ENCODE measurements at regions of chr1 and their contacts with region 1.

Region 1: GRCh38 chr1:203673550-203674427 is 47.2 kb downstream of the ATP2B4 start:
- DNase-seq: peak; percentile 41 to 90 (median 75)
- ATAC-seq: peak; percentile 87 to 93 (median 91)
- H3K4me3 ChIP-seq: no peak overlapping the region
- H3K4me3 Mint-ChIP-seq: peak overlapping the region; percentile 64 to 72 (median 64)
- H3K27ac ChIP-seq: peak overlapping the region; percentile 77
- H3K27ac Mint-ChIP-seq: peak overlapping the region; percentile 98 to 100
- H3K4me1 ChIP-seq: peaks cover 49 to 81% of the 10 kb centered on the region in 2 experiments
- H3K4me1 Mint-ChIP-seq: peaks cover 65 to 85% (median 75%) of the 10 kb centered on the region in 3 donors
- H3K27me3 ChIP-seq: no peaks in the 10 kb centered on the region
- H3K27me3 Mint-ChIP-seq: no peaks in the 10 kb centered on the region

Region 2: GRCh38 chr1:203555076-203555475 is 118.7 kb before region 1 on chr1:
- CTCF ChIA-PET with region 1: interaction called in 1 of 2 experiments, 11 read pairs
- POLR2A ChIA-PET with region 1: no interaction called
- DNase-seq: no peak
- ATAC-seq: no peak
- H3K4me3 ChIP-seq: no peak overlapping the region
- H3K4me3 Mint-ChIP-seq: no peak overlapping the region
- H3K27ac ChIP-seq: no peak overlapping the region
- H3K27ac Mint-ChIP-seq: no peak overlapping the region
- H3K4me1 ChIP-seq: no peaks in the 10 kb centered on the region
- H3K4me1 Mint-ChIP-seq: no peaks in the 10 kb centered on the region
- H3K27me3 ChIP-seq: peaks cover 0 to 5% of the 10 kb centered on the region in 2 experiments
- H3K27me3 Mint-ChIP-seq: peaks cover 0 to 4% of the 10 kb centered on the region in 2 donors

Region 3: DNA sequence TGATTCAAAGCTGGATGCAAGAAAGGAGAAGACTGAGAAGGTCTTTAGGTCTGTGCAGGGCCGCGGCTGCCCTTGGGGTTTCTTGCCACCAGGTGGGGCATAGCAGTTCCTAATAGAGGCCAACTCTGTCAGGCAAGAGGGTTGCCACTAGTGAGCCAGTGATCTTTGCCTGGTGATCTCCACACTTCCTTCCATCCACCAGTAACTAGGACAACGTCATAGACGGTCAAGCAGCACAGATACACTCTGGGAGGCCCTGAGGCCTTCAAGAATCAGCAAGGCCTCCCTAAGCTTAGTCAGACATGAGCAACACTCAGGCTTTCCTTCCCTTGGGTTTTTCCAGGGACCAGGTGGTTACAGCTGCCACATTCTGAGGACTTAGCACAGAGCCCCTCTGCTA is 80.1 kb before region 1 on chr1:
- CTCF ChIA-PET with region 1: no interaction called
- POLR2A ChIA-PET with region 1: interaction called in 1 of 2 experiments, 11 read pairs
- DNase-seq: peak; percentile 12 to 75 (median 51)
- ATAC-seq: peak; percentile 62 to 93 (median 90)
- H3K4me3 ChIP-seq: no peak overlapping the region
- H3K4me3 Mint-ChIP-seq: no peak overlapping the region
- H3K27ac ChIP-seq: no peak overlapping the region
- H3K27ac Mint-ChIP-seq: peak overlapping the region in 1 of 2 donors; percentile 53
- H3K4me1 ChIP-seq: peaks cover 0 to 7% of the 10 kb centered on the region in 2 experiments
- H3K4me1 Mint-ChIP-seq: peaks cover 9 to 16% (median 15%) of the 10 kb centered on the region in 3 donors
- H3K27me3 ChIP-seq: peaks cover 0 to under 1% of the 10 kb centered on the region in 2 experiments
- H3K27me3 Mint-ChIP-seq: peaks cover 0 to 4% of the 10 kb centered on the region in 2 donors

Region 4: GRCh38 chr1:203649999-203650855 is 23.6 kb before region 1 on chr1:
- CTCF ChIA-PET with region 1: interaction called in 1 of 2 experiments, 47 read pairs
- POLR2A ChIA-PET with region 1: interaction called, 3 to 11 read pairs
- DNase-seq: peak in 34 of 35 experiments; percentile 10 to 81 (median 52)
- ATAC-seq: peak; percentile 65 to 82 (median 78)
- H3K4me3 ChIP-seq: peak overlapping the region; percentile 43 to 46
- H3K4me3 Mint-ChIP-seq: peak overlapping the region; percentile 71 to 83 (median 81)
- H3K27ac ChIP-seq: peak overlapping the region; percentile 89
- H3K27ac Mint-ChIP-seq: peak overlapping the region; percentile 93 to 95
- H3K4me1 ChIP-seq: peaks cover 40 to 82% of the 10 kb centered on the region in 2 experiments
- H3K4me1 Mint-ChIP-seq: peaks cover 68 to 84% (median 77%) of the 10 kb centered on the region in 3 donors
- H3K27me3 ChIP-seq: no peaks in the 10 kb centered on the region
- H3K27me3 Mint-ChIP-seq: no peaks in the 10 kb centered on the region

Region 5: DNA sequence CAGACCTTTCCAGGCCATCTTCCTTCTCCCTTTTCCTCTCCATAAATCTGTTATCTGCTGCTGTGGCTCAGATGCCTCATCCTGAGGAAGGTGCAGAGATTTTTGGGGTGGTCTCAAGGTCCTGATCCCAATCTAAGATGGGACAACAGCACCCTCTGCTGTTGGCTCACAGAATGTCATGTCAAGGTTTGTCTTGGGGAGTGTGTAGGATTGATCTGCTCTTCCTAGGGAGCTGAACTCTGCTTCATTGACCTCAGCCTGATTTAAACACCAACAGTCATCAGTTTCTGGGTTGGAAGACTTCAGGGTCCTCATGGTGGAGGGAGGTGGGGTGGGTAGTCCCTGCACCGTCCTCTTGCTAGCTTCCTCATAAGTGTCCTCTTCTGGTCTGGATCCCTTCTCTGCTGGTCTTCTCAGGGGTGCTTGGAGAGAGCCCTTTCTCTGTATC is 28.4 kb after region 1 on chr1:
- CTCF ChIA-PET with region 1: interaction called, 11 to 29 read pairs
- POLR2A ChIA-PET with region 1: interaction called in 1 of 2 experiments, 3 read pairs
- DNase-seq: peak in 34 of 35 experiments; percentile 24 to 85 (median 54)
- ATAC-seq: peak; percentile 60 to 75 (median 71)
- H3K4me3 ChIP-seq: no peak overlapping the region
- H3K4me3 Mint-ChIP-seq: no peak overlapping the region
- H3K27ac ChIP-seq: no peak overlapping the region
- H3K27ac Mint-ChIP-seq: peak overlapping the region; percentile 73 to 82
- H3K4me1 ChIP-seq: no peaks in the 10 kb centered on the region
- H3K4me1 Mint-ChIP-seq: peaks cover 10 to 15% (median 11%) of the 10 kb centered on the region in 3 donors
- H3K27me3 ChIP-seq: no peaks in the 10 kb centered on the region
- H3K27me3 Mint-ChIP-seq: no peaks in the 10 kb centered on the region

Region 6: GRCh38 chr1:203754455-203754864 is 80.7 kb after region 1 on chr1:
- CTCF ChIA-PET with region 1: interaction called in 1 of 2 experiments, 12 read pairs
- POLR2A ChIA-PET with region 1: no interaction called
- DNase-seq: peak in 8 of 35 experiments; percentile 17 to 49 (median 26)
- ATAC-seq: peak; percentile 72 to 86 (median 80)
- H3K4me3 ChIP-seq: no peak overlapping the region
- H3K4me3 Mint-ChIP-seq: peak overlapping the region; percentile 38 to 55 (median 49)
- H3K27ac ChIP-seq: peak overlapping the region; percentile 36
- H3K27ac Mint-ChIP-seq: peak overlapping the region; percentile 94 to 95
- H3K4me1 ChIP-seq: peaks cover 6 to 32% of the 10 kb centered on the region in 2 experiments
- H3K4me1 Mint-ChIP-seq: peaks cover 31 to 37% (median 33%) of the 10 kb centered on the region in 3 donors
- H3K27me3 ChIP-seq: no peaks in the 10 kb centered on the region
- H3K27me3 Mint-ChIP-seq: no peaks in the 10 kb centered on the region

Region 7: GRCh38 chr1:205668951-205669340 is 1995.2 kb after region 1 on chr1:
- CTCF ChIA-PET with region 1: no interaction called
- POLR2A ChIA-PET with region 1: interaction called in 1 of 2 experiments, 13 read pairs
- DNase-seq: no peak
- ATAC-seq: no peak
- H3K4me3 ChIP-seq: no peak overlapping the region
- H3K4me3 Mint-ChIP-seq: no peak overlapping the region
- H3K27ac ChIP-seq: no peak overlapping the region
- H3K27ac Mint-ChIP-seq: no peak overlapping the region
- H3K4me1 ChIP-seq: peaks cover 0 to 2% of the 10 kb centered on the region in 2 experiments
- H3K4me1 Mint-ChIP-seq: peaks cover 0 to 11% (median 0%) of the 10 kb centered on the region in 3 donors
- H3K27me3 ChIP-seq: peaks cover 0 to 54% of the 10 kb centered on the region in 2 experiments
- H3K27me3 Mint-ChIP-seq: peaks cover 9 to 20% of the 10 kb centered on the region in 2 donors

Measured in T-cell (primary cell).